Activated CD4-positive, alpha-beta memory T cell treated with anti-CD3 and anti-CD28 coated beads, Interleukin-2, amount 10 ng/mL, durations not matched to agents 7 days and 5 days (primary cell): ENCODE measurements at regions of chr7 and their contacts with region 1.

Region 1: GRCh38 chr7:131692131-131692960 is 135.9 kb upstream of the PODXL start:
- DNase-seq: peak; percentile 51
- H3K4me3 Mint-ChIP-seq: no peak overlapping the region
- H3K27ac Mint-ChIP-seq: no peak overlapping the region
- H3K4me1 Mint-ChIP-seq: no peaks in the 10 kb centered on the region
- H3K27me3 Mint-ChIP-seq: peaks cover 9% of the 10 kb centered on the region

Region 2: GRCh38 chr7:131681961-131682360 is 10.4 kb before region 1 on chr7:
- CTCF ChIA-PET with region 1: interaction called, 12 read pairs
- POLR2A ChIA-PET with region 1: no interaction called
- DNase-seq: no peak
- H3K4me3 Mint-ChIP-seq: no peak overlapping the region
- H3K27ac Mint-ChIP-seq: no peak overlapping the region
- H3K4me1 Mint-ChIP-seq: no peaks in the 10 kb centered on the region
- H3K27me3 Mint-ChIP-seq: peaks cover 17% of the 10 kb centered on the region

Region 3: GRCh38 chr7:131723926-131724325 is 31.6 kb after region 1 on chr7:
- CTCF ChIA-PET with region 1: no interaction called
- POLR2A ChIA-PET with region 1: no interaction called
- DNase-seq: no peak
- H3K4me3 Mint-ChIP-seq: no peak overlapping the region
- H3K27ac Mint-ChIP-seq: no peak overlapping the region
- H3K4me1 Mint-ChIP-seq: no peaks in the 10 kb centered on the region
- H3K27me3 Mint-ChIP-seq: no peaks in the 10 kb centered on the region